ENCODE measurements at regions of chr5 and their contacts with region 1.

Region 1: GRCh38 chr5:172984243-172984953 is 827 bp downstream of the ATP6V0E1 start:
- DNase-seq: peak; percentile 89
- H3K4me3 Mint-ChIP-seq: peak overlapping the region; percentile 94
- H3K27ac Mint-ChIP-seq: peak overlapping the region; percentile 98
- H3K4me1 Mint-ChIP-seq: peaks cover 30% of the 10 kb centered on the region
- H3K27me3 Mint-ChIP-seq: no peaks in the 10 kb centered on the region

Region 2: GRCh38 chr5:172748341-172748843 is 236.0 kb before region 1 on chr5:
- CTCF ChIA-PET with region 1: no interaction called
- POLR2A ChIA-PET with region 1: no interaction called
- intact Hi-C with region 1: no loop called
- DNase-seq: no peak
- H3K4me3 Mint-ChIP-seq: no peak overlapping the region
- H3K27ac Mint-ChIP-seq: no peak overlapping the region
- H3K4me1 Mint-ChIP-seq: peaks cover 2% of the 10 kb centered on the region
- H3K27me3 Mint-ChIP-seq: peaks cover 3% of the 10 kb centered on the region

Region 3: DNA sequence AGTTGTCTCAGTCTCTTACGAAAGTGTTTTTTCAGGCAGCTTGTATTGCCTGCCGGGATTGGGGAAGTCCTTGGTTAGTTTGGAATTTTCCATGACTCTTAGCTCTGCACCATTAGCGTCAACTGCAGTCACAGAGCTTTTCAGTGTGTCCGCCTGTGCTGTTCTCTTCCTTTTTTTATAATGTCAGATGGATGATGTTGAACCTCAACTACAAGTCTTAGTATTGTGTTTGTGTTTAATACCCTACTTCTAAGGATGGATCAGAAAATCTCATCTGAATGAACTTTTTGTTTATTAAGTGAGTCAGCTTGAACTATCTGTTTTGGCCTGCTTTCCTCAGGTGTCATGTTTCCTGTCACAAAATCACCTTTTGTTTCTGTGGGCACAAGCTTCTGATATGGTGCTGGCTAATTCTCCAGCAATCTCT is 32.2 kb after region 1 on chr5:
- CTCF ChIA-PET with region 1: no interaction called
- POLR2A ChIA-PET with region 1: interaction called, 3 read pairs
- intact Hi-C with region 1: loop called (anchors 1 kb)
- DNase-seq: no peak
- H3K4me3 Mint-ChIP-seq: no peak overlapping the region
- H3K27ac Mint-ChIP-seq: peak overlapping the region; percentile 74
- H3K4me1 Mint-ChIP-seq: peaks cover 31% of the 10 kb centered on the region
- H3K27me3 Mint-ChIP-seq: no peaks in the 10 kb centered on the region

Region 4: DNA sequence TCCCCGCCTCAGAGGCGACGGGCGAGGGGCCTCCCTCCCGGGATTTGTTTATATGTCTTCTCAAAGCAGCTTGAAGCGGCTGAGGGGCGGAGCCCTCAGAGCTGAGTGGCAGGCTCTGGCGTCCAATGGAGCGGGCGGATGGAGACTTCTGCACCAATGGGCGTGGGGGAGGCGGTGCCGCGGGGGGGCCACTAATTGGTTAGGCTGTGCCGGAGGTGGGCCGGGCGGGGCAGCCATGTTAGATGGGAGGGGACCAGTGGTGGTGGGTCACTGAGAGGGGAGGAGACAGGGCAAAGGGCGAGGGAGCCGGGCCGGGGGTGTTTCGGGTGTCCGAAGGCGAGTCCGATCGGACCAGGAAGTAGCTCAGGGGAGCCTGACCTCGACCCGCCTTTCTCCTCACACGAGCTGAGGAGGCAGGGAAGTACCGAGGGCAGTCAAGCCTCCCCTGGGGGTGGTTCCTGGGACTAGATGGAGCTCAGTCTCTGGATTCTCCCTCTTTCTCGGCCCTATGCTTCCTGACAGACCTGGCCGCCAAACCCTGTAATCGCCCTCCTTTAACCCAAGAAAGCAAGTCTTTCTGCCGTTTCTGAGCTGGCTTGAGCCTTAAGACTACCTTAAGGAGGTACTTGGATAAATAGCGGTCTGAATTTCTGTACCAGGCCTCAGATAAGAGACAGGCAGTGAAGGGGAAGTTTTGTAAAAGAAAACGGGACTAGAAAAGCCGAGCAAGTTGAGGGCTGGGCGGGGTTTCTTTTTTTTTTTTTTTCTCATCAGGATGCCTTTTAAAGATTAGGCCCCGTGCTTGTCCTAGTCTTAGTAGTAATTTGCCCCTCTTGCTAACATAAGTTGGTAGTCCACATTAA is 72.9 kb after region 1 on chr5:
- CTCF ChIA-PET with region 1: interaction called, 25 read pairs
- POLR2A ChIA-PET with region 1: interaction called, 28 read pairs
- intact Hi-C with region 1: loop called (anchors 1 kb)
- DNase-seq: peak; percentile 100
- H3K4me3 Mint-ChIP-seq: peak overlapping the region; percentile 97
- H3K27ac Mint-ChIP-seq: peak overlapping the region; percentile 97
- H3K4me1 Mint-ChIP-seq: peaks cover 44% of the 10 kb centered on the region
- H3K27me3 Mint-ChIP-seq: no peaks in the 10 kb centered on the region

Region 5: GRCh38 chr5:173144200-173145176 is 160.1 kb after region 1 on chr5 and contains the start of gene BNIP1:
- CTCF ChIA-PET with region 1: interaction called, 30 read pairs
- POLR2A ChIA-PET with region 1: interaction called, 16 read pairs
- intact Hi-C with region 1: loop called (anchors 1 kb)
- DNase-seq: peak; percentile 98
- H3K4me3 Mint-ChIP-seq: peak within 1 kb of the TSS; percentile 99
- H3K27ac Mint-ChIP-seq: peak within 1 kb of the TSS; percentile 97
- H3K4me1 Mint-ChIP-seq: peaks cover 9% of the 10 kb centered on the region
- H3K27me3 Mint-ChIP-seq: no peaks in the 10 kb centered on the region
- total RNA-seq, gene BNIP1: 19.3 to 20.9 TPM

Region 6: GRCh38 chr5:173283318-173284288 is 299.2 kb after region 1 on chr5:
- CTCF ChIA-PET with region 1: interaction called, 3 read pairs
- POLR2A ChIA-PET with region 1: no interaction called
- intact Hi-C with region 1: loop called (anchors 2 kb)
- DNase-seq: peak; percentile 81
- H3K4me3 Mint-ChIP-seq: no peak overlapping the region
- H3K27ac Mint-ChIP-seq: no peak overlapping the region
- H3K4me1 Mint-ChIP-seq: peaks cover 7% of the 10 kb centered on the region
- H3K27me3 Mint-ChIP-seq: peaks cover 52% of the 10 kb centered on the region

Region 7: DNA sequence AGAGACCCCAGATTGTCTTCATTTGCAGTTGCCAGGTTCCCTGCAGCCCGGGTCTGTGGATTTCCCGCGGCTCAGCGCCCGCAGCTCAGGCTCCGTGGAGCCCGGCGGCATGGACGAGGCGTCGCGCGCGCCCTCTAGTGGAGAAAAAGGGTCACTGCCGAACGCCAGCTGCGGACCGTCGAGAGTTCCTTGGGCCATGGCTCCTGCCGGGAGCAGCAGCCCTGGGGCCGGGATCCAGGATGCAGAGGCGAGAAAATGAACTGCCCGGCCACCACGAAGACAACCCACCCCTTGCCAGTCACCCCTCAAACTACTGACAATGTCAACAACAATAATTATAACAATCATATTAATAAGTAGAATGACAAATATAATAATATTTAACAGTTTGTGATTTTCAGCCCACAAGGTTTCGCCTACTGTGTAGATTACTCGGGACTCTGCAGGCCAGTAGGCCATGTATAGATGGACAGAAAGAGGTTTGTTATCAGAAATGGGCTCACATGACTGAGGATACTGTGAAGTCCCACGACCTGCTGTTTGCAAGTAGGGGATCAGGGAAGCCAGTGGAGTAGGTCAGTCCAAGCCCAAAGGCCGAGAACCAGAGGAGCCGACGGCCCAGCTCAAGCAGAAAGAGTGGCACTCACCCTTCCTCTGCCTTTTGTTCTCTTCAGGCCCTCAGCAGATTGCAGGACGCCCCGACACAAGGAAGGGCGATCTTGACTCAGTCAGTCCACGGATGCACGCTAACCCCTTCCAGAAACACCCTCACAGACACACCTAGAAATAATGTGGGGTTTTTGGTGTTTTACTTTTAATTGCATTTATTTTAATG is 588.9 kb after region 1 on chr5:
- CTCF ChIA-PET with region 1: no interaction called
- POLR2A ChIA-PET with region 1: no interaction called
- intact Hi-C with region 1: loop called (anchors 5 kb)
- DNase-seq: peak; percentile 74
- H3K4me3 Mint-ChIP-seq: no peak overlapping the region
- H3K27ac Mint-ChIP-seq: no peak overlapping the region
- H3K4me1 Mint-ChIP-seq: no peaks in the 10 kb centered on the region
- H3K27me3 Mint-ChIP-seq: peaks cover 23% of the 10 kb centered on the region